ENCODE measurements at regions of chr6 and their contacts with region 1.

Region 1: DNA sequence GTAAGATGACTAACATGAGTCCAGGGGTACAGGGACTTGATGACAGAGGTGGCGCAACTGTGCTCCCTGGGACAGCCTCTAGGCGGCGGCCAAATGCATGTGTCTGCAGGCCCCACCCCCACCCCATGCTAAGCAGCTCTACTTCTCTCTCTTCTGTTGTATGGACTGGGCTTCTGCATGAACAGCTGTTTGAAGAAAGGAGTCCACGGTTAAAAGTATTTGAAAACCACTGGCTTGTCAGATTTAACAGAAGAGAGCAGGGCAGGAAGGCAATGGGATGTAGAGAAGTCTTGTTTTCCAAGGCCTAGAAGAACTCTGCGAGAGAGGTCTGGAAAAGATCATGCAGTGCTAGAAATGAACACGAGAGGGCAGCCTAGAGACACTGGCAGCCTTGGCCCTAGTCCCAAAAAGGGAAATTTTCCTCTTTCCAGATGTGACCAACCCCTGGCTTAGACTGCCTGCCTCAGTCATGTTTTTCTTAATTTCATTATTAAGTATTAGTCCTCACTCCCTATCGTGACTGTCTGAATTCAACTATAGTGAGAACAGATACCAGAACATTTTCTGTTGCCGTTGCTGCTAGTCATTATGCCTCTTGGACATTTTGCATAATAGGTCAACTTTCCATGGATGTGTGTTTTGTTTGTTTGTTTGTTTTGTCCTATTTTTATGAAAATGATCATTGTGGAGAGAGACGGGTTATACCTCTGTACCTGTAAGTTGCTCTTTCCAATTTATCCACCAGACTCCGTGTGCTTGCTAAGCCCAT is 265.0 kb downstream of the ADGRG6 start:
- DNase-seq: peak; percentile 81
- H3K4me3 Mint-ChIP-seq: no peak overlapping the region
- H3K27ac Mint-ChIP-seq: no peak overlapping the region
- H3K4me1 Mint-ChIP-seq: peaks cover 80% of the 10 kb centered on the region
- H3K27me3 Mint-ChIP-seq: no peaks in the 10 kb centered on the region

Region 2: GRCh38 chr6:142474531-142475289 is 92.1 kb before region 1 on chr6:
- CTCF ChIA-PET with region 1: interaction called, 7 read pairs
- intact Hi-C with region 1: loop called (anchors 1 kb)
- DNase-seq: peak; percentile 10
- H3K4me3 Mint-ChIP-seq: no peak overlapping the region
- H3K27ac Mint-ChIP-seq: no peak overlapping the region
- H3K4me1 Mint-ChIP-seq: peaks cover 11% of the 10 kb centered on the region
- H3K27me3 Mint-ChIP-seq: no peaks in the 10 kb centered on the region

Region 3: GRCh38 chr6:142679907-142680700 is 113.3 kb after region 1 on chr6:
- CTCF ChIA-PET with region 1: interaction called, 5 read pairs
- intact Hi-C with region 1: loop called (anchors 1 kb)
- DNase-seq: peak; percentile 71
- H3K4me3 Mint-ChIP-seq: no peak overlapping the region
- H3K27ac Mint-ChIP-seq: peak overlapping the region; percentile 10
- H3K4me1 Mint-ChIP-seq: peaks cover 36% of the 10 kb centered on the region
- H3K27me3 Mint-ChIP-seq: no peaks in the 10 kb centered on the region

Region 4: DNA sequence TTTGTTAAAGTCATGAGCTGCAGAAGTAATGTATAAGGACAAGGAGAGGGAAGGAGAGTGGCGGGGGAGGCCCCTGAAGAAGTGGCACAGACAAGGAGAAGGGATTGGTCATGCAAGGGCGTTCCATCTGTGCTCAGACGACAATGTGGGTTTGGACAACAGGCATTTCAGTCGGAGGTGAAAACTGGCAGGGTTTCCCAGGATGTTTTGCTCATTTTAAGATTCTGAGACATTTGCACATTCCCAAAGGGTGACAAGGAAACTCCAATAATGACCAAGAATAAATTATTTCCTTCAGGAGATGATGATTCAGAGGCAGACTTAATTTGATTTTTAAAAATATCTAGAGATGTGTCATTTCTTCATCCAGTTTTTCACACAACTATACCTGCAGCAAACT is 196.4 kb after region 1 on chr6:
- CTCF ChIA-PET with region 1: no interaction called
- intact Hi-C with region 1: no loop called
- DNase-seq: no peak
- H3K4me3 Mint-ChIP-seq: no peak overlapping the region
- H3K27ac Mint-ChIP-seq: no peak overlapping the region
- H3K4me1 Mint-ChIP-seq: peaks cover 31% of the 10 kb centered on the region
- H3K27me3 Mint-ChIP-seq: no peaks in the 10 kb centered on the region

Region 5: GRCh38 chr6:142819603-142820337 is 253.0 kb after region 1 on chr6:
- CTCF ChIA-PET with region 1: no interaction called
- intact Hi-C with region 1: loop called (anchors 1 kb)
- DNase-seq: peak; percentile 65
- H3K4me3 Mint-ChIP-seq: peak overlapping the region; percentile 79
- H3K27ac Mint-ChIP-seq: peak overlapping the region; percentile 94
- H3K4me1 Mint-ChIP-seq: peaks cover 83% of the 10 kb centered on the region
- H3K27me3 Mint-ChIP-seq: no peaks in the 10 kb centered on the region

Region 6: GRCh38 chr6:142885182-142885867 is 318.5 kb after region 1 on chr6:
- CTCF ChIA-PET with region 1: no interaction called
- intact Hi-C with region 1: loop called (anchors 1 kb)
- DNase-seq: peak; percentile 66
- H3K4me3 Mint-ChIP-seq: peak overlapping the region; percentile 90
- H3K27ac Mint-ChIP-seq: peak overlapping the region; percentile 99
- H3K4me1 Mint-ChIP-seq: peaks cover 87% of the 10 kb centered on the region
- H3K27me3 Mint-ChIP-seq: no peaks in the 10 kb centered on the region

Region 7: GRCh38 chr6:143136647-143137046 is 569.8 kb after region 1 on chr6:
- CTCF ChIA-PET with region 1: no interaction called
- intact Hi-C with region 1: loop called (anchors 5 kb)
- DNase-seq: no peak
- H3K4me3 Mint-ChIP-seq: no peak overlapping the region
- H3K27ac Mint-ChIP-seq: peak overlapping the region; percentile 62
- H3K4me1 Mint-ChIP-seq: peaks cover 51% of the 10 kb centered on the region
- H3K27me3 Mint-ChIP-seq: no peaks in the 10 kb centered on the region

Region 8: DNA sequence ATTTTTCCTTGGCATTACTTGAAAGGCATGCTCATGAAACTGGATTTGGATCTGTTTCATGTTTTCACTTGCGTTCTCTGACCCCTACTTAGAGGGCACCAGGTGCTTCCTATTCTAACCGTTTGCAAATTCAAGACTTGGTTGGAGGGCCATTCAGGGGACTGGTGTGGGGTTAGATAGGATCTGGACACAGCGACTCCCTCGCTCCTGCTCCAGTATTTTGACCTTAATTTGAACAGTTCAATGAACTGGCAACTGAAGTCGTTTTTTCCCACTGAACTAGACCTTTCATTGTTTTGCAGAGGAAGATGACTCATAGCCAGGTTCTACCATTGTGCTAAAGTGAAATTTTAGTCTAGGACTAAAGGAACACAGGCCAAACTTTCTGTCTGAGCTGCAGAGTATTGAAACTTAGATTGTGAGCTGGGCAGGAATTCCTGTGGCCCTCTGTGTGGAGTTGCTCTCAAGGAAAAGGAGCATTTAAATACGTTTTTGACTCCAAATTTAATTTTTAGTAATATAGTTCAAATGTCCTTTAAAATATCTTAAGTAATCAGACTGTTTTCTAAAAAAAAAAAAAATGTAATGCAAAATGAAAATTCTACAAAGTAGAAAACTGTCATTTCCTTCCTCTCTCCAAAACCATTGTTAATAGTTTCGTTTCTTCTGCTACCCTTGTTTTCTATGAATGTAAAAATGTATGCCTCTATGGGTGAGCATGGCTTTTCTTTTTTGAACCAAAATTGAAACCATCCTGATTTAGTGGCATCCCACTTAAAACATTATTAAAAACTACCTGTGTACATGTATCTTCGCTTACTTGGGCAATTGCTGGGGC is 1783.1 kb after region 1 on chr6:
- CTCF ChIA-PET with region 1: no interaction called
- intact Hi-C with region 1: loop called (anchors 5 kb)
- DNase-seq: no peak
- H3K4me3 Mint-ChIP-seq: peak overlapping the region; percentile 65
- H3K27ac Mint-ChIP-seq: peak overlapping the region; percentile 85
- H3K4me1 Mint-ChIP-seq: peaks cover 88% of the 10 kb centered on the region
- H3K27me3 Mint-ChIP-seq: no peaks in the 10 kb centered on the region

Measured in activated naive CD4-positive, alpha-beta T cell treated with anti-CD3 and anti-CD28 coated beads for 36 hours (primary cell).